Endothelial cell of umbilical vein (primary cell): ENCODE measurements at regions of chr19 and their contacts with region 1.

Region 1: DNA sequence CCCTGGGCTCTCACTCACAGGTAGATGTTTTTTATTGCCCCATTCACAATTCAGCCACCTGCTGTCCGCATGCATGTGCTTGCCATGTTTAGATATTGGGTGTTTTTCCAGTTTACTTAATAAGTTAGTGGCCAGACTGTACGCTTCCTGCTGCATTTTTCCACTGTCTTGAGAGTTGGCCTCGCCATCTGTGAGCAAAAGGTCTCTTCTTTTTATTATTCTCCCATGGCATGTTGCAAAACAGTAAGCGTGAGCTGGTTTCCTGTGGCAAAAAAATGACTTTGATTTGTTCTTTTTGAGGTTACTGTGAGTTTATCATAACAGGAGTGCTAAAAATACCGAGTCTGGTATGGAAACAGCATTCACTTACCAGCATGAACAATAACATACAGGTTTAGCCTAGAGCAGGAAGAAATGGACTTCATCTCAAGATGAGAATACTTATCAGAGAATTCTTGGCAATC is 46.0 kb downstream of the SAE1 start:
- DNase-seq: peak; percentile 100
- H3K4me3 ChIP-seq: peak overlapping the region in 1 of 3 experiments; percentile 15
- H3K27ac ChIP-seq: peak overlapping the region; percentile 97
- H3K4me1 ChIP-seq: peaks cover 49% of the 10 kb centered on the region
- H3K27me3 ChIP-seq: no peaks in the 10 kb centered on the region
- CTCF ChIP-seq: no peak
- POLR2A ChIP-seq: no peak

Region 2: GRCh38 chr19:47157431-47158321 is 19.0 kb before region 1 on chr19:
- CTCF ChIA-PET with region 1: interaction called, 11 read pairs
- POLR2A ChIA-PET with region 1: interaction called, 3 read pairs
- dilution Hi-C with region 1: no loop called
- intact Hi-C with region 1: loop called (anchors 1 kb)
- DNase-seq: peak; percentile 90
- H3K4me3 ChIP-seq: no peak overlapping the region
- H3K27ac ChIP-seq: peak overlapping the region; percentile 95
- H3K4me1 ChIP-seq: peaks cover 33% of the 10 kb centered on the region
- H3K27me3 ChIP-seq: no peaks in the 10 kb centered on the region
- CTCF ChIP-seq: peak in 1 of 2 donors; percentile 11
- POLR2A ChIP-seq: no peak

Region 3: GRCh38 chr19:47190167-47190727 is 13.6 kb after region 1 on chr19:
- CTCF ChIA-PET with region 1: interaction called, 8 read pairs
- POLR2A ChIA-PET with region 1: no interaction called
- dilution Hi-C with region 1: no loop called
- intact Hi-C with region 1: loop called (anchors 1 kb)
- DNase-seq: peak; percentile 97
- H3K4me3 ChIP-seq: peak overlapping the region in 1 of 3 experiments; percentile 20
- H3K27ac ChIP-seq: peak overlapping the region; percentile 96
- H3K4me1 ChIP-seq: peaks cover 24% of the 10 kb centered on the region
- H3K27me3 ChIP-seq: no peaks in the 10 kb centered on the region
- CTCF ChIP-seq: no peak
- POLR2A ChIP-seq: no peak

Region 4: GRCh38 chr19:47225746-47226425 is 49.2 kb after region 1 on chr19:
- CTCF ChIA-PET with region 1: no interaction called
- POLR2A ChIA-PET with region 1: interaction called, 7 read pairs
- dilution Hi-C with region 1: no loop called
- intact Hi-C with region 1: loop called (anchors 2 kb)
- DNase-seq: peak; percentile 84
- H3K4me3 ChIP-seq: peak overlapping the region in 1 of 3 experiments; percentile 31
- H3K27ac ChIP-seq: peak overlapping the region; percentile 61
- H3K4me1 ChIP-seq: peaks cover 22% of the 10 kb centered on the region
- H3K27me3 ChIP-seq: no peaks in the 10 kb centered on the region
- CTCF ChIP-seq: peak in 1 of 2 donors; percentile 6
- POLR2A ChIP-seq: peak; percentile 100

Region 5: GRCh38 chr19:47256688-47257443 is 80.2 kb after region 1 on chr19:
- CTCF ChIA-PET with region 1: interaction called, 3 read pairs
- POLR2A ChIA-PET with region 1: no interaction called
- dilution Hi-C with region 1: no loop called
- intact Hi-C with region 1: loop called (anchors 1 kb)
- DNase-seq: peak; percentile 99
- H3K4me3 ChIP-seq: peak overlapping the region in 2 of 3 experiments; percentile 34 to 73
- H3K27ac ChIP-seq: peak overlapping the region; percentile 96
- H3K4me1 ChIP-seq: peaks cover 11% of the 10 kb centered on the region
- H3K27me3 ChIP-seq: no peaks in the 10 kb centered on the region
- CTCF ChIP-seq: no peak
- POLR2A ChIP-seq: no peak

Region 6: GRCh38 chr19:47273313-47273977 is 96.8 kb after region 1 on chr19:
- CTCF ChIA-PET with region 1: no interaction called
- POLR2A ChIA-PET with region 1: no interaction called
- dilution Hi-C with region 1: no loop called
- intact Hi-C with region 1: no loop called
- DNase-seq: peak; percentile 91
- H3K4me3 ChIP-seq: peak overlapping the region; percentile 16 to 67 (median 64)
- H3K27ac ChIP-seq: peak overlapping the region; percentile 92
- H3K4me1 ChIP-seq: peaks cover 13% of the 10 kb centered on the region
- H3K27me3 ChIP-seq: no peaks in the 10 kb centered on the region
- CTCF ChIP-seq: no peak
- POLR2A ChIP-seq: peak; percentile 75